H1 (cell line): ENCODE measurements at regions of chr3 and their contacts with region 1.

Region 1: DNA sequence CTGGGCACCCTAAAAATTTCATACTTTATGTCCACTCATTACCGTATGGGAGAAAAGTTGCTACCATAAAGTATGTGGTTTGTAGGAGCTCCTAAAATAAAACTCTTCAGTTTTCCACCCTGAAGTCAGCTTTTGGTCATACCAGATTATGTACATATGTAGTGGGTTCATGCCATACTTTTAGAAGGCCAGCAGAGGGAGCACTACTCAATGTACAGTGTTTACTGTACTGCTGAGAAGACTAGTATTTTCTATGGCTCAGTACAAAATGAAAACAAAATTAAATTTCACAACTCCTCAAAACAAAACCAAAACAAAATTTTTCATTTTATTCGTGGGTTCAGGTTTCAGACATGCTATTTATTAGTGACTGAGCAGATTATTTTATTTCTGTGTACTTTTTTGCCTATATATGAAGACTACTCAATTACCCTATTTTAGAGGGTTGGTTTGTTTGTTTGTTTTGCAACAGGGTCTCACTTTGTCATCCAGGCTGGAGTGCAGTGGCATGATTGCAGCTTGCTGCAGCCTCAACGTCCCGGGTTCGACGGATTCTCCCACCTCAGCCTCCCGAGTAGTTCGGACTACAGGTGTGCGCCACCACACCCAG is 24.3 kb downstream of the NXPE3 start:
- DNase-seq: no peak
- H3K4me3 ChIP-seq: no peak overlapping the region
- H3K27ac ChIP-seq: no peak overlapping the region
- H3K4me1 ChIP-seq: no peaks in the 10 kb centered on the region
- H3K27me3 ChIP-seq: no peaks in the 10 kb centered on the region
- CTCF ChIP-seq: peak in 2 of 3 experiments; percentile 45 to 77; a peak in 2 of 4 replicates
- EP300 ChIP-seq: no peak
- POLR2A ChIP-seq: no peak
- RAD21 ChIP-seq: peak; percentile 53

Region 2: GRCh38 chr3:101758224-101758623 is 45.1 kb before region 1 on chr3:
- CTCF ChIA-PET with region 1: no interaction called
- POLR2A ChIA-PET with region 1: no interaction called
- DNase-seq: no peak
- H3K4me3 ChIP-seq: no peak overlapping the region
- H3K27ac ChIP-seq: no peak overlapping the region
- H3K4me1 ChIP-seq: no peaks in the 10 kb centered on the region
- H3K27me3 ChIP-seq: no peaks in the 10 kb centered on the region
- CTCF ChIP-seq: no peak
- EP300 ChIP-seq: no peak
- POLR2A ChIP-seq: no peak
- RAD21 ChIP-seq: no peak

Region 3: DNA sequence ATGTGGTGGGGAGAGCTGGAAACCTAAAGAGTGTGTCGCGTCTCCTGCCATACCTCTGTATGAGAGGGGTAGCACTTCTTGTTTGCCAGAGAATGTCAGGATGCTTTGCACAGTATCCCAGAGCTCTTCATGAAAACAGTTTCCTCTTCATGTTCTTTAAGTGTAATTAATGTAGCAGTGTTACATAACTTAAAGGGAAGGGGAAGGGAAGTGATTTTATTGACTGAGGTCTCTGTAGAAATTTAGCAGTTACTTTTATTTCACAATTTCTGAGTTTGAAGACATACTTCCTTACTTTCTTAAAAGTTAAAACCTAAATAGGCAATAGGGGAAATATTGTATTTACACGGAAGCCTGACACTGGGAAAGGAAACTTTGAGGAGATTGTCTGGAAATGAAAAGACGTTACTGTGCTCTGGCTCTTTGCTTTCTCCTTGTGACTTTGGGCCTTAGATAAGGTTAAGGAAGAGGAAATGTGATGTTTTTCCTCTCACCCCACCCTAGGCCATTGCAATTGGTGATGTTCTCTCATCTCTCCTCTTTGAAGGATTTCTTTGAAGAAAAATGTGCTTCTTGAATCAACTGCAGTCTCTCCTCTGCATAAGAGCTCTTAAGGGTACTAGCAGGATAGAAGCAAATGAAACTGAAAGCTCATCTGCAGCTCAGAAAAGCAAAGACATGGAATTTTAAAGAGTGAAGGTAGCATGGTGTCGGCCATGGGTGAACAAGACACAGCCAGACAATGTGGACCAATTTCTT is 18.2 kb before region 1 on chr3:
- CTCF ChIA-PET with region 1: interaction called, 13 read pairs
- POLR2A ChIA-PET with region 1: no interaction called
- DNase-seq: no peak
- H3K4me3 ChIP-seq: no peak overlapping the region
- H3K27ac ChIP-seq: no peak overlapping the region
- H3K4me1 ChIP-seq: peaks cover 3 to 5% (median 5%) of the 10 kb centered on the region in 4 experiments; a peak in 5 of 7 replicates
- H3K27me3 ChIP-seq: no peaks in the 10 kb centered on the region
- CTCF ChIP-seq: no peak
- EP300 ChIP-seq: no peak
- POLR2A ChIP-seq: no peak
- RAD21 ChIP-seq: no peak

Region 4: DNA sequence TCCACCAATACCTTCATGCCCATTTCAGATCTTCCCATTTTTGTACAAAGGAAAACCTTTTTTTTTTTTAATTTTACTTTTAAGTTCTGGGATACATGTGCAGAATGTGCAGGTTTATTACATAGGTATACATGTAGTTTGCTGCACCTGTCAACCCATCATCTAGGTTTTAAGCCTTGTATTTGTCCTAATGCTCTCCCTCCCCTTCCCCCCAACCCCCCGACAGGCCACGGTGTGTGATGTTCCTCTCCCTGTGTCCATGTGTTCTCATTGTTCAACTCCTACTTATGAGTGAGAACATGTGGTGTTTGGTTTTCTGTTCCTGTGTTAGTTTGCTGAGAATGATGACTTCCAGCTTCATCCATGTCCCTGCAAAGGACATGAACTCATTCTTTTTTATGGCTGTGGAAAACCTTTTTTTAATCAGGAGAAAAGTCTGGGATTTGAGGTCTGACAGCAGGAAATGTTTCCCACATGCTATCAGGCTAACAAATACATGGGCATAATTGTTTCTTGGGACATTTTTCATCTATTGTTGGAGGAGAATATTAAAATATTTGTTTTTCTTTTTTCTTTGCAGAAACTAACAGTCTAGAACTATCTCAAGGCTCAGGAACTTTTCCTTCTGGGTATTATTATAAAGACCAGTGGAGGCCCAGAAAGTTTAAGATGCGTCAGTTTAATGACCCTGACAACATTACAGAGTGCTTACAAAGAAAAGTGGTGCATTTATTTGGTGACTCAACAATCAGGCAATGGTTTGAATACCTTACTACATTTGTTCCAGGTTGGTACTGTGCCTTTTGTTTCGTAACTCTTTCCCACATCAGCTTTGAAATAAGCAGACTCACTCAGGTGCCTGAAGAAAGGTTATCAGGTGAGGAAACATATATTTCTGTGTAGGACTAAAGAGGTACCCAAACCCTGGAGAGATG is 13.2 kb after region 1 on chr3:
- CTCF ChIA-PET with region 1: interaction called, 12 read pairs
- POLR2A ChIA-PET with region 1: no interaction called
- DNase-seq: no peak
- H3K4me3 ChIP-seq: no peak overlapping the region
- H3K27ac ChIP-seq: no peak overlapping the region
- H3K4me1 ChIP-seq: no peaks in the 10 kb centered on the region
- H3K27me3 ChIP-seq: no peaks in the 10 kb centered on the region
- CTCF ChIP-seq: no peak
- EP300 ChIP-seq: no peak
- POLR2A ChIP-seq: no peak
- RAD21 ChIP-seq: no peak

Region 5: GRCh38 chr3:101821503-101821902 is 18.2 kb after region 1 on chr3:
- CTCF ChIA-PET with region 1: interaction called, 12 read pairs
- POLR2A ChIA-PET with region 1: no interaction called
- DNase-seq: no peak
- H3K4me3 ChIP-seq: no peak overlapping the region
- H3K27ac ChIP-seq: no peak overlapping the region
- H3K4me1 ChIP-seq: no peaks in the 10 kb centered on the region
- H3K27me3 ChIP-seq: no peaks in the 10 kb centered on the region
- CTCF ChIP-seq: no peak
- EP300 ChIP-seq: no peak
- POLR2A ChIP-seq: no peak
- RAD21 ChIP-seq: no peak

Region 6: GRCh38 chr3:101890716-101891115 is 87.4 kb after region 1 on chr3:
- CTCF ChIA-PET with region 1: no interaction called
- POLR2A ChIA-PET with region 1: no interaction called
- DNase-seq: no peak
- H3K4me3 ChIP-seq: no peak overlapping the region
- H3K27ac ChIP-seq: no peak overlapping the region
- H3K4me1 ChIP-seq: no peaks in the 10 kb centered on the region
- H3K27me3 ChIP-seq: no peaks in the 10 kb centered on the region
- CTCF ChIP-seq: no peak
- EP300 ChIP-seq: no peak
- POLR2A ChIP-seq: no peak
- RAD21 ChIP-seq: no peak